WTC11 (cell line): ENCODE measurements at regions of chr3 and their contacts with region 1.

Region 1: DNA sequence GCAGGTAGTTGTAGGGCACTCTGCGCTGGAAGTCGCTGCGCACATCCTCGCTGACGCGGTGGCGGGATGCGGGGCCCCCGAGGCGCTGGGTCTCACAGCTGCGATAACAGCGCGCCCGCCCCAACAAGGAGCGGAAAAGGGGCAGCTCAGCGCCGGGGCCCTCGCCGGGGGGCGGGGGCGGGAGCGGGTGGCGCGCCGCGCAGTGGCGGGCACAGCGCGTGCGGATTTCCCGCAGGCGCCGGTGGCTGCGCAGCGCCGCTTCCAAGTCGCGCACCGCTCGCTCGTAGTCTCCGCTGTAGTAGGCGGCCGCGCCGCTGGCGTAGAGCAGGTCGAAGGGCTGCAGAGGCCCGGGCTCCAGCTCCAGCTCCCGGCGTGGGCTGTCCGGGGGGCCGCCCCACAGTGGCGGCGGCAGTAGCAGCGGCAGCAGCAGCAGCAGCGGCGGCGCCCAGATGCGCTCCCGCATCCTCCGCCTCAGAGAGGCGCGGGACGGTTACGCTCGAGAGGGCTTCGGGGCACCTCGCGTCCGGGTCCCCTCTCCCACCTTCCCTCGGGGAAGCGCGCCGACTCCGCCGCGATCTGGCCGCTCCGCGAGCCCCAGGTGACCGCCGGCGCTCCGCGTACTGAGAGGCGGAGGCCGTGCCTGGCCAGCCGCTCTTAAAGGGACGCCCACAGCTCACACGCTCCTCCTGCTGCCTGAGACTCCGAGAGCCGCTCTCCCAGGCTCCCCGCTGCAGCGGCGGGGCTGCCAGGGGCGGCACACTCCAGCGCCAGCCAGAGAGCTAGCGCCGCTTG is at the start of gene P3H2:
- DNase-seq: peak; percentile 84
- ATAC-seq: peak; percentile 97
- H3K4me3 Mint-ChIP-seq: peak within 1 kb of the TSS; percentile 85
- H3K27ac Mint-ChIP-seq: no peak within 1 kb of the TSS; the same call in 1 of the 2 replicates
- H3K4me1 Mint-ChIP-seq: peaks cover 61% of the 10 kb centered on the region
- H3K27me3 Mint-ChIP-seq: peaks cover 26% of the 10 kb centered on the region
- CTCF ChIP-seq: no peak
- total RNA-seq, gene P3H2: 29.4 to 39.9 TPM (median 36.2 TPM) in 3 replicates

Region 2: DNA sequence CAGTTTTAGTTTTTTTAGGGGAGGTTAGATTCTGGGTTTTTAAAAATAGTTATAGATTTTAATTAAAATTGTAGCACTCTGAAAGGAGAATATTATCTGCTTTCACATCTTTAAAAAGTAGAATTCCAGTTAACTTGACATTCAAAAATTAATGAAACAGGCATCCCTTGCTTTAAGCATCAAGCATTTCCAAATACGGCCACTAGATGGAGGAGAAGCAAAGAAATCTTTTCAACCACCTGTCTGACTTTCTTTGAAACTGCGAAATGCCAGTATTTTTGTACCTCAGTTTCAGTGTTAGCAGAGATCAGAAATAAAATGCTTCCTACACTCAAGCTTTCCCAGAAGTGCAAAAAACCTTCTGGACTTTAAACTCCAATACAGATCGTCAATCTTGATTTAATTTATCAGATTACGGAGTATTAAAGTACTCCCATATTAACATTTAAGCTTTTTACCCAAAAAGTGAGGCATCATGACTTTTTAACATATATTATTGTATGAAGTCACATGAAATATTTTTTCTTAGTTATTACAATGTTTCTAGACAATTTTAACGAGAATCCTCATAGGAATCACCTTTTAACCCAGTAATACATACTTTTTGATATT is 153.1 kb before region 1 on chr3:
- CTCF ChIA-PET with region 1: interaction called, 17 read pairs
- POLR2A ChIA-PET with region 1: no interaction called
- DNase-seq: no peak
- ATAC-seq: peak; percentile 34; the same call in 1 of the 2 replicates
- H3K4me3 Mint-ChIP-seq: no peak overlapping the region
- H3K27ac Mint-ChIP-seq: no peak overlapping the region; the same call in 1 of the 2 replicates
- H3K4me1 Mint-ChIP-seq: peaks cover 17% of the 10 kb centered on the region
- H3K27me3 Mint-ChIP-seq: no peaks in the 10 kb centered on the region
- CTCF ChIP-seq: peak; percentile 85

Region 3: GRCh38 chr3:190032924-190033323 is 87.5 kb before region 1 on chr3:
- CTCF ChIA-PET with region 1: interaction called, 23 read pairs
- POLR2A ChIA-PET with region 1: no interaction called
- DNase-seq: peak; percentile 67
- ATAC-seq: peak; percentile 98
- H3K4me3 Mint-ChIP-seq: no peak overlapping the region
- H3K27ac Mint-ChIP-seq: peak overlapping the region; percentile 32; the same call in 1 of the 2 replicates
- H3K4me1 Mint-ChIP-seq: peaks cover 58% of the 10 kb centered on the region
- H3K27me3 Mint-ChIP-seq: no peaks in the 10 kb centered on the region
- CTCF ChIP-seq: no peak